ENCODE measurements at regions of chr2 and their contacts with region 1.

Region 1: GRCh38 chr2:26172871-26173775 is at the start of gene GAREM2:
- DNase-seq: no peak
- ATAC-seq: peak; percentile 14
- H3K4me3 Mint-ChIP-seq: peak within 1 kb of the TSS; percentile 67
- H3K27ac Mint-ChIP-seq: no peak within 1 kb of the TSS
- H3K4me1 Mint-ChIP-seq: peaks cover 5% of the 10 kb centered on the region
- H3K27me3 Mint-ChIP-seq: peaks cover 26% of the 10 kb centered on the region
- total RNA-seq, gene GAREM2: 3.2 to 5.7 TPM

Region 2: GRCh38 chr2:25650256-25650655 is 522.9 kb before region 1 on chr2:
- CTCF ChIA-PET with region 1: no interaction called
- POLR2A ChIA-PET with region 1: no interaction called
- intact Hi-C with region 1: no loop called
- DNase-seq: no peak
- ATAC-seq: no peak
- H3K4me3 Mint-ChIP-seq: no peak overlapping the region
- H3K27ac Mint-ChIP-seq: no peak overlapping the region
- H3K4me1 Mint-ChIP-seq: no peaks in the 10 kb centered on the region
- H3K27me3 Mint-ChIP-seq: no peaks in the 10 kb centered on the region

Region 3: GRCh38 chr2:26184555-26185303 is 11.6 kb after region 1 on chr2:
- CTCF ChIA-PET with region 1: interaction called, 19 read pairs
- POLR2A ChIA-PET with region 1: no interaction called
- intact Hi-C with region 1: no loop called
- DNase-seq: peak; percentile 92
- ATAC-seq: peak; percentile 97
- H3K4me3 Mint-ChIP-seq: peak overlapping the region; percentile 75
- H3K27ac Mint-ChIP-seq: peak overlapping the region; percentile 60
- H3K4me1 Mint-ChIP-seq: peaks cover 16% of the 10 kb centered on the region
- H3K27me3 Mint-ChIP-seq: peaks cover 15% of the 10 kb centered on the region

Region 4: GRCh38 chr2:26299471-26300101 is 126.5 kb after region 1 on chr2:
- CTCF ChIA-PET with region 1: no interaction called
- POLR2A ChIA-PET with region 1: no interaction called
- intact Hi-C with region 1: no loop called
- DNase-seq: peak; percentile 51
- ATAC-seq: peak; percentile 56
- H3K4me3 Mint-ChIP-seq: no peak overlapping the region
- H3K27ac Mint-ChIP-seq: no peak overlapping the region
- H3K4me1 Mint-ChIP-seq: no peaks in the 10 kb centered on the region
- H3K27me3 Mint-ChIP-seq: no peaks in the 10 kb centered on the region

Measured in activated CD4-positive, alpha-beta T cell treated with anti-CD3 and anti-CD28 coated beads for 36 hours (primary cell).